ENCODE measurements at regions of chr9 and their contacts with region 1.

Region 1: GRCh38 chr9:113737517-113738271 is 138.4 kb upstream of the ZNF618 start:
- DNase-seq: peak in 1 of 2 donors; percentile 66
- H3K4me3 ChIP-seq: no peak overlapping the region
- H3K27ac ChIP-seq: no peak overlapping the region
- H3K4me1 ChIP-seq: no peaks in the 10 kb centered on the region
- H3K27me3 ChIP-seq: no peaks in the 10 kb centered on the region
- CTCF ChIP-seq: peak; percentile 61 to 83 (median 78)

Region 2: GRCh38 chr9:113785334-113785733 is 47.6 kb after region 1 on chr9:
- intact Hi-C with region 1: loop called (anchors 10 kb)
- DNase-seq: no peak
- H3K4me3 ChIP-seq: no peak overlapping the region
- H3K27ac ChIP-seq: no peak overlapping the region
- H3K4me1 ChIP-seq: no peaks in the 10 kb centered on the region
- H3K27me3 ChIP-seq: no peaks in the 10 kb centered on the region
- CTCF ChIP-seq: no peak

Region 3: DNA sequence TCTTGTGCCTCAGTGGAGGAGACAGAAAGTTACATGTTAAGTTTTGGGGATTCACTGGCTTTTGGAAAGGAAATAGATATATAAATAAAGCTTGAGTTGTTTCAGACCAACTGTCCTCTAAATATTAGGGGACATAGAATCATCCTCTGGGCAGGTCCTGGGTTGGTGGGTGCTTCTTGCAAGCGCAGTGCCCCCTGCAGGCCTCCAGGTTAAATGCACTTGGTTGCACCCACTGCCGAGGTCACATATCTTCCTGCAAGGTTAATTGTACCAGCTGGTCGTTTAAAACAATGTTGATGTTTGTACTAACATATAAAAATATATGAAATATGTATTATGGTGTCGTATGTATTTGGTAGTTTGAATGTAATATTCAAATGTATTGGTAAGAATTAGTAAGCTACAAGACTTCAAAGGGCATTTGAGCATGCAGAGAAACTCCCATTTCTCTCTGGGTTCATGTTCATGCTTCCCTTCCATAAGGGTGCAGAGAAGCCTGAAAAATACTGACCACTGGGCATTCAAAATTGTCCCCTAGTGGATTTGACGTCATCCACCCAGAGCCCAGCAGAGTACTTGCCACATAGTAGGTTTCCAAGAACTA is 225.4 kb after region 1 on chr9:
- intact Hi-C with region 1: loop called (anchors 5 kb)
- DNase-seq: peak in 1 of 2 donors; percentile 72
- H3K4me3 ChIP-seq: no peak overlapping the region
- H3K27ac ChIP-seq: no peak overlapping the region
- H3K4me1 ChIP-seq: peaks cover 0 to 9% of the 10 kb centered on the region in 2 donors
- H3K27me3 ChIP-seq: no peaks in the 10 kb centered on the region
- CTCF ChIP-seq: peak; percentile 28 to 61 (median 55)

Region 4: GRCh38 chr9:114033397-114034103 is 295.9 kb after region 1 on chr9:
- intact Hi-C with region 1: loop called (anchors 5 kb)
- DNase-seq: peak in 1 of 2 donors; percentile 64
- H3K4me3 ChIP-seq: no peak overlapping the region
- H3K27ac ChIP-seq: no peak overlapping the region
- H3K4me1 ChIP-seq: peaks cover 0 to 13% of the 10 kb centered on the region in 2 donors
- H3K27me3 ChIP-seq: no peaks in the 10 kb centered on the region
- CTCF ChIP-seq: peak; percentile 40 to 59 (median 52)

Measured in ascending aorta (tissue), 2 donors.